ENCODE measurements at regions of chr15 and their contacts with region 1.

Region 1: GRCh38 chr15:34038023-34038870 is 757 bp downstream of the AVEN start:
- DNase-seq: peak; percentile 60
- H3K4me3 Mint-ChIP-seq: peak overlapping the region; percentile 91
- H3K27ac Mint-ChIP-seq: peak overlapping the region; percentile 89
- H3K4me1 Mint-ChIP-seq: peaks cover 28% of the 10 kb centered on the region
- H3K27me3 Mint-ChIP-seq: peaks cover 5% of the 10 kb centered on the region

Region 2: GRCh38 chr15:33852557-33852956 is 185.7 kb before region 1 on chr15:
- intact Hi-C with region 1: no loop called
- DNase-seq: no peak
- H3K4me3 Mint-ChIP-seq: no peak overlapping the region
- H3K27ac Mint-ChIP-seq: no peak overlapping the region
- H3K4me1 Mint-ChIP-seq: no peaks in the 10 kb centered on the region
- H3K27me3 Mint-ChIP-seq: peaks cover 2% of the 10 kb centered on the region

Region 3: GRCh38 chr15:34018021-34018645 is 20.1 kb before region 1 on chr15:
- intact Hi-C with region 1: loop called (anchors 2 kb)
- DNase-seq: peak; percentile 46
- H3K4me3 Mint-ChIP-seq: peak overlapping the region; percentile 44
- H3K27ac Mint-ChIP-seq: peak overlapping the region; percentile 14
- H3K4me1 Mint-ChIP-seq: peaks cover 22% of the 10 kb centered on the region
- H3K27me3 Mint-ChIP-seq: peaks cover 2% of the 10 kb centered on the region

Region 4: GRCh38 chr15:34209421-34210282 is 171.4 kb after region 1 on chr15 and contains the start of gene KATNBL1:
- intact Hi-C with region 1: loop called (anchors 1 kb)
- DNase-seq: peak; percentile 92
- H3K4me3 Mint-ChIP-seq: peak within 1 kb of the TSS; percentile 89
- H3K27ac Mint-ChIP-seq: peak within 1 kb of the TSS; percentile 72
- H3K4me1 Mint-ChIP-seq: peaks cover 34% of the 10 kb centered on the region
- H3K27me3 Mint-ChIP-seq: peaks cover 5% of the 10 kb centered on the region
- total RNA-seq, gene KATNBL1: 37.6 and 42.1 TPM in 2 replicates

Region 5: DNA sequence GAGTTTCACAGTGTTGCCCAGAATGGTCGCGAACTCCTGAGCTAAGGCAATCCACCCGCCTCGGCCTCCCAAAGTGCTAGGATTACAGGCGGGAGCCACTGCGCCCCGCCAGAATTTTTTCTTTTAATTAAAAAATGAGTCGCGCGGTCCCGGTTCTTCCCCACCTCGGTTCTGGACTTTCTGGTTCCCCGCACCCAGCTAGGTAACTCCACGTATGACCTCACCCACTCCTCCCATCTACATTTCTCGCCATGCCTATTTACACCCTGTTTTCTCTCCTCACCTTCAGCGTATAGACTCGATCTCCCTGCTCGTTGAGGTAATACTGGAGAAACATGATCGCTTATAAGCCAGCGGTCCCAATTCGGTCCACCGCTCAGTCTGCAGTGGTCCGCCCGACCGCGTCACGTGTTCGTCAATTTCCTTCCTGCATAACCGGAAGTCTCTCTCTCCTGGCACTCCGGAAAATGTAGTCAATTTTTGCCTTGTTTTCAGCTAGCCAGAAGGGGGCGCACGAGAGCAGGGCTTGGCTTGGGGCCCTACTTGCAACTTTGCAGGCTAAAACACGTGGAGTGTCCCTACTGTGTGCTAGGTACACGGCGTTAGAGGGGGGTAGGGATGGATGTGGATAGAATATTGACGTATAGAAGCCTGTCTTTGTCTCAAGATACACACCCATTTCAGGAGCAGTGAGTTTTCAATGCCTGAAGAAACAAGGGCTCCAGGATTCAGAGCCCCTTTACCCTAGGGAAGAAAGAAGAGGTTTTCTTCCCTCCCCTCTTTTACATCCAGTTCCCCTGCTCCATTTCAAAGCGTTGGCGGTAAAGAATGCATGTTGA is 304.7 kb after region 1 on chr15 and contains the starts of genes NOP10 and NUTM1:
- intact Hi-C with region 1: loop called (anchors 2 kb)
- DNase-seq: peak; percentile 91
- H3K4me3 Mint-ChIP-seq: no peak within 1 kb of the TSS
- H3K27ac Mint-ChIP-seq: peak within 1 kb of the TSS; percentile 88
- H3K4me1 Mint-ChIP-seq: peaks cover 26% of the 10 kb centered on the region
- H3K27me3 Mint-ChIP-seq: no peaks in the 10 kb centered on the region
- total RNA-seq, gene NOP10: 257 and 267 TPM in 2 replicates
- total RNA-seq, gene NUTM1: not detected in 2 replicates

Region 6: GRCh38 chr15:34987985-34988873 is 950.0 kb after region 1 on chr15 and contains the start of gene ZNF770:
- intact Hi-C with region 1: loop called (anchors 5 kb)
- DNase-seq: peak; percentile 84
- H3K4me3 Mint-ChIP-seq: peak within 1 kb of the TSS; percentile 97
- H3K27ac Mint-ChIP-seq: peak within 1 kb of the TSS; percentile 96
- H3K4me1 Mint-ChIP-seq: peaks cover 44% of the 10 kb centered on the region
- H3K27me3 Mint-ChIP-seq: no peaks in the 10 kb centered on the region
- total RNA-seq, gene ZNF770: 50.1 and 50.6 TPM in 2 replicates

Measured in activated T-helper 1 cell treated with anti-CD3 and anti-CD28 coated beads, Interleukin-12 subunit alpha, Interleukin-12 subunit beta, Interleukin-2, Interleukin-4 antibody, amounts not matched to agents 30 ng/mL and 10 ng/mL and 1 ng/mL, durations not matched to agents 14 hours and 24 hours and 36 hours (primary cell).